OCI-LY7 (cell line): ENCODE measurements at regions of chr11 and their contacts with region 1.

Region 1: DNA sequence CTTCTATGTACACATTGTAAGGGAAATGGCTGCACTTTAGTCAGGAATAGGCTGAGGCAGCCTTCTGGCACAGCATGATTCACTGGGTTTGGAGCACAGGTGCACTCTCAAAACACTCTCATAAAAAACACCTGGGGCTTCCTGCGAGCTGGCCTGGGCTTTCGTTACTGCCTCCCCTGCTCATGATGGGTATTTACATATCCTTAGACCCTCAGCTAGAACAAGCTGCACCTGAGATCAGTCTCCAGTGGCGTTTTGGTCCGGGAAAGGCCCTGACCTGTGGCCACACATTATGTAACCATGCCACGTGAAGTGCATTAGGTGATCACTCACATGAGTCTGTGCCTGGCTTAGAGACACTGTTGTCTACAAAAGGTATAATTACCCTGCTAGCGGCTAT is 321.7 kb downstream of the TMEM135 start:
- DNase-seq: peak; percentile 89
- H3K4me3 ChIP-seq: peak overlapping the region; percentile 65
- H3K27ac ChIP-seq: peak overlapping the region; percentile 92
- H3K4me1 ChIP-seq: peaks cover 95% of the 10 kb centered on the region
- CTCF ChIP-seq: no peak

Region 2: DNA sequence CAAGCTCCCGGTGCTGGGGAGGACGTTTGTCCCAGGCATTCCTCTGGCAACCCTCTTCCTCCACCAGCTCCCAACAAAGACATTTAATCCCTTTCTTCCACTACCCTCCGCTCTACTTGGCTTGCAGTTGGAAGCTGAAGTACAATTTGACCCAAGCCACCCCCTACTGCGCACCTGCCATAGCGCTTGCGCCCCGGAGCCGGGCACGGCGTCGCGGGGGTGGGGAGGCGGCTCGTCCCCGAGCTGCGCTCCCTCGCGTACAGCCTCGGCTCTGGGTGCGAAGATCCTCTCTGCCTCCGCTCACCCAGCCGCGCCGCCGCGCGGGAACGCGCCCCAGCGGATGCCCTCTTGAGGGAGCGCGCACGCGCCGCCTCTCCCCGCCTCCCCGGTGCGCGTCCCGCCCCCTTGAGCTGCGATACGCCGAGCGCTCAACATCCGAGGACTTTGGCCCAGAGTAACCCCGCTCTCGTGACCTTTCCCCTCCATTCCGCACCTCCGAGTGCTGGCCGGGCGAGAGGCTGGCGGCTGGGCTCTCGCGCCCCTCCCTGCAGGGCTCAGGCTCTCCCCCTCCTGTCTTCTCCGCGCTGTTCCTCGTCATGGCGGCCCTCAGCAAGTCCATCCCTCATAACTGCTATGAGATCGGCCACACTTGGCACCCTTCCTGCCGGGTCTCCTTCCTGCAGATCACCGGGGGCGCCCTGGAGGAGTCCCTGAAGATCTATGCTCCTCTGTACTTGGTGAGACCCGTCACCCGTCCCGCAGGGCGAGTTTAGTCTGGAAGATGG is 321.8 kb before region 1 on chr11 and contains the start of gene TMEM135:
- CTCF ChIA-PET with region 1: no interaction called
- POLR2A ChIA-PET with region 1: no interaction called
- intact Hi-C with region 1: loop called (anchors 1 kb)
- DNase-seq: peak; percentile 97
- H3K4me3 ChIP-seq: peak within 1 kb of the TSS; percentile 79
- H3K27ac ChIP-seq: peak within 1 kb of the TSS; percentile 54
- H3K4me1 ChIP-seq: peaks cover 27% of the 10 kb centered on the region
- CTCF ChIP-seq: peak; percentile 23; the same call in 1 of the 2 replicates
- total RNA-seq, gene TMEM135: 9.4 and 14.5 TPM in 2 replicates

Region 3: GRCh38 chr11:88012456-88012855 is 653.1 kb after region 1 on chr11:
- CTCF ChIA-PET with region 1: no interaction called
- POLR2A ChIA-PET with region 1: no interaction called
- intact Hi-C with region 1: no loop called
- DNase-seq: no peak
- H3K4me3 ChIP-seq: no peak overlapping the region
- H3K27ac ChIP-seq: no peak overlapping the region
- H3K4me1 ChIP-seq: no peaks in the 10 kb centered on the region
- CTCF ChIP-seq: no peak